ENCODE measurements at regions of chr3 and their contacts with region 1.

Region 1: DNA sequence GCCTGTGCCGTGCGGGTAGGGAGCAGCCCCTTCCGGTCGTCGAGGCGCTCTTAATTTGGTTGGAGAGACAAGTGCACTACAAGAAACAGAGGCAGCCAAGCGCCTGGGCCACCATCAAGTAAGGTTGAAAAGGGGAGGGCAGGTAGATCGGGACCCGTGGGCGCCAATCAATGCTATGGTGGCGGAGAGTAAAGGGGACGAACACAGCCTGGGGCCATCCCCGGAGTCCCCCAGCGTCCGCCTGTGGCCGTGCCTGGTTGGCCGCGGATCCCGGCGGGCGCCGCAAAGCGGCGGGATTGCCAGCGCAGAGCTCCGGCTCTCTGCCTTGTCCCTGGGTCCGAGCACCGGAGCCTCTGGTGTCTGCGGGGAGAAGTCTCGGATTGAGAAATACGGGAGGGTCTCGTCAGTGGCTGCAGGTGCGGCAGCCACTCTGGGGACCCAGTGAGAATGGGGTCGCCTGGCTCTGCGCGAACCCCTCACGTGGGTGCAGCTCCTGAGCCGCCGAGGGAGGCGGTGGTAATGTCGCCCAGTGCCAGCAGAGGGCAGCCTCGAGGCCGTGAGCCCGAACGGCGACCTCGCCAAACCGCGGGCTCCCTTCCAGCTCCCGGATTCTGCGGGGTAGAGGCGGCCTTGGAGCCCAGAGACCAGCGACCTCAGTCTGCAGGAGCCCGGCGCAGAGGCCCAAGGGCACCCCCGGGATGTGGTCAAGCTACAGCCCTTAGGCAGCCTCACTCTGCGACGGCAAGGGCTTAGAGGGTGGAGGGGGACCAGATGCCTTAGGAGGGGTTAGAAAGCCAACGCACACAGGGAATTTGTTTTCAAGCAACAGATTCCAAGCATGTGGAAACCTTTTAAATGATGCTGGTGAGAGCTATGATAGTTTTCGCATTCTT is 10.8 kb downstream of the FOXL2 start:
- DNase-seq: peak; percentile 44 to 83 (median 63)
- ATAC-seq: peak; percentile 82
- H3K4me3 ChIP-seq: peak overlapping the region; percentile 43
- H3K4me3 Mint-ChIP-seq: peak overlapping the region; percentile 80
- H3K27ac ChIP-seq: no peak overlapping the region
- H3K27ac Mint-ChIP-seq: no peak overlapping the region
- H3K4me1 ChIP-seq: peaks cover 47% of the 10 kb centered on the region
- H3K4me1 Mint-ChIP-seq: peaks cover 40% of the 10 kb centered on the region
- H3K27me3 ChIP-seq: peaks cover 75 to 80% of the 10 kb centered on the region in 2 experiments
- H3K27me3 Mint-ChIP-seq: peaks cover 92% of the 10 kb centered on the region
- CTCF ChIP-seq: peak; percentile 95

Region 2: DNA sequence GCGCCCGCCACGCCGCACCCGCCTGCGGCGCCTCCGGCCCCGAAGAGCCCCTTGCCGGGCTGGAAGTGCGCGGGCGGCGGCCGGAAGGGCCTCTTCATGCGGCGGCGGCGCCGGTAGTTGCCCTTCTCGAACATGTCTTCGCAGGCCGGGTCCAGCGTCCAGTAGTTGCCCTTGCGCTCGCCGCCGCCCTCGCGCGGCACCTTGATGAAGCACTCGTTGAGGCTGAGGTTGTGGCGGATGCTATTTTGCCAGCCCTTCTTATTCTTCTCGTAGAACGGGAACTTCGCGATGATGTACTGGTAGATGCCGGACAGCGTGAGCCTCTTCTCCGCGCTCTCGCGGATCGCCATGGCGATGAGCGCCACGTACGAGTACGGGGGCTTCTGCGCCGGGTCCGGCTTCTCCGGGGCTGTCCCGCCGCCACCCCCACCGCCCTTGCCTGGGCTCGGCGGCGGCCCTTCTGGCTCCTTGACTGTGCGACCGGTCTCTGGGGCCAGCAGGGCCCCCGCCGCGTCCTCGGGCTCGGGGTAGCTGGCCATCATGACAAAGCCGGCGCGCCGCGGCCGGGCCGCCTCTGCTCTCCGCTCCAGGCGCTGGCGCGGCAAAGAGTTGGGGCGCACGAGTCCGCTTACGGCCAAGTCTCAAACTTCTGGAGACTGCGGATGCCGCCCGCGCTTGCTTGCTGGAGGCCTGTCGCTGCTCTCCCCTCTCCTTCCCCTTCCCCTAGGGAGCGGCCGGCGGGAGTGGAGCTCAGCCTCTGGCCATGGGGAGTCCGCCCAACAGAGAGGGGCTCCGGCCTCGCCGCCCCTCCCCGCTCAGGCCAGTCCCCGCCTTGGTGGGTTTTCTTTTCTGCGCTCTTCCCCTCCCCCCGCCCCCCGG is 10.3 kb after region 1 on chr3:
- CTCF ChIA-PET with region 1: interaction called, 18 read pairs
- POLR2A ChIA-PET with region 1: interaction called, 3 read pairs
- intact Hi-C with region 1: no loop called
- DNase-seq: peak in 3 of 14 experiments; percentile 16 to 59 (median 56)
- ATAC-seq: no peak
- H3K4me3 ChIP-seq: peak overlapping the region; percentile 33
- H3K4me3 Mint-ChIP-seq: peak overlapping the region; percentile 76
- H3K27ac ChIP-seq: no peak overlapping the region
- H3K27ac Mint-ChIP-seq: no peak overlapping the region
- H3K4me1 ChIP-seq: peaks cover 55% of the 10 kb centered on the region
- H3K4me1 Mint-ChIP-seq: peaks cover 52% of the 10 kb centered on the region
- H3K27me3 ChIP-seq: peaks cover 77 to 97% of the 10 kb centered on the region in 2 experiments
- H3K27me3 Mint-ChIP-seq: peaks cover 90% of the 10 kb centered on the region
- CTCF ChIP-seq: no peak